Endothelial cell of umbilical vein (primary cell): ENCODE measurements at regions of chr17 and their contacts with region 1.

Region 1: GRCh38 chr17:45277216-45277849 is 15.4 kb upstream of the SPATA32 start:
- DNase-seq: peak; percentile 93
- H3K4me3 ChIP-seq: no peak overlapping the region
- H3K27ac ChIP-seq: peak overlapping the region; percentile 40
- H3K4me1 ChIP-seq: peaks cover 27% of the 10 kb centered on the region
- H3K27me3 ChIP-seq: no peaks in the 10 kb centered on the region
- CTCF ChIP-seq: peak; percentile 72 to 82
- POLR2A ChIP-seq: no peak

Region 2: DNA sequence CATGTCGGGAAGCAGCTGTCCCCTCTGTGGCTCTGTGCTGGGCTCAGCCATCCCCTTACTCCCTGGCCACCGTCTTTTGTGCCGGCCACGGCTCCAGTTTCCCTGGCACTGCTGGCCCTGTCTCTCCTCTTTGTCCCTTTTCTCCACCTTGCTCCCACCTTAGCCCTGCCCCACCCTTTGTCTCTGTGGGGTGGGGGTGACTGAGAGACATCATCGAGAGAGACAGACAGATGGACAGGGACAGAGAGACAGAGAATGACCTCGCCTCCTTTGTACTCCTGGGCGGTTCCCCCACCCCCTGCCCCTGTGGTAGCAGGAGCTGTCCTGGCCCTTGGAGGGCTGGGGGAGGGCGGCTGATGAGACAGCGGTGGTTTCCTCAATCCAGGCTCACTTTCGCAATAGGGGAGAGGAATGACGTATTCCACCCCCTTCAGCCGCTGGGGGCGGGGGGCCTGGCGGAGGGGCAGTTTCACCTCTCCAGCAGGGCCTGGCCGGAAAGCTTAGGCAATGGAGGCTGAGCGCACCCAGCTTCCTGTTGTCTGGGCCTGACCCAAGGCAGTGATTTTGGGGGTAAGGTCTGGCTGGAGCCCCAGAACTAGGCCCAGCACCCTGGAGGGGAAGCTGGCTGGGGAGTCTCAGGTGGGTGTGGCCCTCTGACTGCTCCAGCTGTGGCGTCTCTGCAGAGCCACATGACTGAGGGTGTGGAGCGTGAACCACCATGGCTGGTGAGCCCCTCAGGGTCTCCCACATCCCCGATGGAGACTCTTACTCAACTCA is 48.4 kb before region 1 on chr17:
- CTCF ChIA-PET with region 1: interaction called, 12 read pairs
- POLR2A ChIA-PET with region 1: no interaction called
- dilution Hi-C with region 1: no loop called
- intact Hi-C with region 1: no loop called
- DNase-seq: no peak
- H3K4me3 ChIP-seq: no peak overlapping the region
- H3K27ac ChIP-seq: no peak overlapping the region
- H3K4me1 ChIP-seq: peaks cover 8% of the 10 kb centered on the region
- H3K27me3 ChIP-seq: no peaks in the 10 kb centered on the region
- CTCF ChIP-seq: no peak
- POLR2A ChIP-seq: no peak

Region 3: DNA sequence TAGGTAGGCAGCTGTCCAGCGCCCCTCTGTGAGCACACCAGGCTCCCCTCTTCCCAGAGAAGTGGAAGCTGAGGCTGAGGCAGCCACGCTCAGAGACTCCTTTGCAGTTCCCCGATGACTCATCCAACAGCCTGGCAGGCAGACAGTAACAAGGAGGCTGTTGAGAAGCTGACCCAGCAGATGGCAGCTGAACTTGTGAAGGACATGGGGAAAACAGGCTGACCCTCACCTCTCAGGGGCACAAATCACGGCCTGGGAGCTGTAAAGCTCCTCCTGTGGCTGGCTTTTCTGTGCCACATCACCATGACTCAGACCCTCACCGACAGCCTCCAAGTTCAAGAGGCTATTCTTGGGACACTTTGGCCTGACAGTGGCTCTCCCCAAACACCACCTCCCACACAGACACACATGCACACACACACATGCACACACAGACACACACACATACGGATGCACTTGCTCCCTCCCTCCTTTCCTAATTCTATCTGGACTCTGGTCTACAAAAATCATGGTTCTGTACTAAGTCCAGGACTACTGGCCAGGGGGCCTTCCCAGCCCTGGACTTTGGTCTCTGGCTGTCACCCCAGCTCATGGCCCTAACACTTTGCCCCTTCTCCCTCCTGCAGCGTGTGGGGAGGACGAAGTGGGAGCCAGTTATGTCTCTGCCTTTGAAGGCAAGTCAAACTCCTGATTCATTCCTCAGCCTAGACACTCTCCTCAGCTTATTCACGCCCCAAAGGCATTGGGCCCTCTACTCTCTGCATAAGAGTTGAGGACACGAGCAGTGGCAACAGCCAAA is 16.3 kb after region 1 on chr17:
- CTCF ChIA-PET with region 1: interaction called, 69 read pairs
- POLR2A ChIA-PET with region 1: interaction called, 7 read pairs
- dilution Hi-C with region 1: no loop called
- intact Hi-C with region 1: no loop called
- DNase-seq: peak; percentile 94
- H3K4me3 ChIP-seq: no peak overlapping the region
- H3K27ac ChIP-seq: peak overlapping the region; percentile 50
- H3K4me1 ChIP-seq: peaks cover 45% of the 10 kb centered on the region
- H3K27me3 ChIP-seq: no peaks in the 10 kb centered on the region
- CTCF ChIP-seq: peak; percentile 5 to 30
- POLR2A ChIP-seq: peak; percentile 41

Region 4: DNA sequence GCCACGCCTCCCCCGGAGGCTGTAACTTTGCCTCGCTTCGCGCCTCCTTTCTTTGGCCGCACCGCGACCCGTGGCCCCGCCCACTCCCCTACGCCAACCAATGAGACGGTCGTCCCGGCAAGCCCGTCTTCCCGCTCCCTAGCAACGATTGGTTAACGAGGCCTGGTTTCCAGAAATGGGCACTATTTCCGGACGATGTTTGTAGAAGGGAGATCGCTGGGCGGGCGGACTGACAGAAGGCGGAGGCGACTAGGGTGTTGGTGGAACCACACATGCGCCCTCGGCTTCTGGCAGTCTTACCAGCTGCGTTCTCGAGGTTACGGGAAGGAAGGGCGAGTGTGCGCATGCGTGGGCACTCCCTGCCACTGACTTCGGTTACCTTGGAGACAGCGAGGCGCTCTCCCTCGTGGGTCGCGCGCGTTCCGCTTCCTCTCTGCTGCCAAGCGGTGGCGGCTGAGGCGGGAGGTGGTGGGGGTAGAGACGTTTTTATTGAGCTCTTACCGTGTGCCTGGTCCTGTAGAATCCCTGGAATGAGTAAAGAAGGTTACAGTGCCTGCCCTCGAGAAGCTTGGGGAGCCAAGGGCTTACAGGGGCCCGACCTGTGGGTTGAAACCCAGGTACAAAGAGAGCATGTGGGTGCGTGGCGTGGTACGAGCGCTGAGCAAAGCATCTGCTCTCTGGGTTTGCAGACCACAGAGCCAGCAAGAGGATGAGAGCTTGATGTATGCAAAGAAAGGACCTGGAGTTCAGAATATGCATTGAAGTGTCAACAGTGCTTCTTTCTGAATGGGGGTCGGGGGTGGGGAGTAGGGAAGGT is 40.0 kb after region 1 on chr17:
- CTCF ChIA-PET with region 1: interaction called, 74 read pairs
- POLR2A ChIA-PET with region 1: interaction called, 13 read pairs
- dilution Hi-C with region 1: no loop called
- intact Hi-C with region 1: loop called (anchors 2 kb)
- DNase-seq: peak; percentile 100
- H3K4me3 ChIP-seq: peak overlapping the region in 2 of 3 experiments; percentile 1 to 34
- H3K27ac ChIP-seq: no peak overlapping the region
- H3K4me1 ChIP-seq: peaks cover 59% of the 10 kb centered on the region
- H3K27me3 ChIP-seq: no peaks in the 10 kb centered on the region
- CTCF ChIP-seq: no peak
- POLR2A ChIP-seq: no peak

Region 5: GRCh38 chr17:45341533-45342158 is 64.3 kb after region 1 on chr17:
- CTCF ChIA-PET with region 1: interaction called, 18 read pairs
- POLR2A ChIA-PET with region 1: no interaction called
- dilution Hi-C with region 1: no loop called
- intact Hi-C with region 1: no loop called
- DNase-seq: peak; percentile 82
- H3K4me3 ChIP-seq: no peak overlapping the region
- H3K27ac ChIP-seq: peak overlapping the region; percentile 58
- H3K4me1 ChIP-seq: peaks cover 32% of the 10 kb centered on the region
- H3K27me3 ChIP-seq: no peaks in the 10 kb centered on the region
- CTCF ChIP-seq: no peak
- POLR2A ChIP-seq: peak; percentile 86

Region 6: DNA sequence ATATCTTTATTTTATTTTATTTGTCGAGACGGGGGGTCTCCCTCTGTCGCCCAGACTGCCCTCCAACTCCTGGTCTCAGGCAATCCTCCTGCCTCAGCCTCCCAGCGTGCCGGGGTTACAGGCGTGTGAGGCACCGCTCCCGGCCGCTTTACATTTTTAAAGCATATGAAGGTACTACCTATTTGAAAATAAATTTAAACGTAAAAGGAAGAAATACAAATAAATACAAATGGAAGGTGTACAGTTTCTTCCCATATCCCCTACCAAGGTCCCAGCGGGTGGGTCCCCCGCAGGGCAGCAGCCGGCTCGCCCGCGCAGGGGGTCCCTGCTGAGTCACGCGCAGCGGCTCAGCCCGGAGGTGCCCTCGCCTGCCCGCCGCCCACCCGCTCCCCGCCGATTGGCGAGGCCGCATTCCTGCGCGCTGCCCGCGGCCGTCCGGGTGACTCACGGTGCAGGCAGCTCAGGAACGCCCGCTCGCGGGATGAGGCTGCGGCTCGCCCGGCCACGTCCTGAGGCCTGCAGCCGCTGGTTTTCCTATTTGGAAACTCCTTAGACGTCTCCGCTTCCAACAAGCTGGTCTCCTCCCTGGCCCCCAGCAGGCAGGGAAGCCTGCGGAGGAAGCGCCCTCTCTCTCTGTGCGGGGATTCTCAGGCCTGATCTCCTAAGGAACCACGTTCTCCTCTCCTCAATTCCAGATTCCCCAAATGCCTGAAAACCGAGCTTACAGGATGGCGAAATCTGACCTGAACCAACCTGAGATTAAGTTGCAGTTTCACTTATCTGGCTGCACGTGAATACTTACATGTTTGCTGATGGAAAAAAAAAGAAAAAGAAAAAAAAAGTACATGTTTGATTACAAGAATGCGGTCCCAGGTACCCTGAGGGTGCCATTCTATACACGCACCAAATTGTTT is 94.3 kb after region 1 on chr17:
- CTCF ChIA-PET with region 1: interaction called, 67 read pairs
- POLR2A ChIA-PET with region 1: interaction called, 5 read pairs
- dilution Hi-C with region 1: no loop called
- intact Hi-C with region 1: no loop called
- DNase-seq: peak; percentile 93
- H3K4me3 ChIP-seq: peak overlapping the region in 2 of 3 experiments; percentile 12 to 18
- H3K27ac ChIP-seq: peak overlapping the region; percentile 97
- H3K4me1 ChIP-seq: peaks cover 20% of the 10 kb centered on the region
- H3K27me3 ChIP-seq: no peaks in the 10 kb centered on the region
- CTCF ChIP-seq: peak in 1 of 2 donors; percentile 3
- POLR2A ChIP-seq: peak; percentile 76